Activated CD4-positive, alpha-beta memory T cell treated with anti-CD3 and anti-CD28 coated beads for 36 hours (primary cell): ENCODE measurements at regions of chr14 and their contacts with region 1.

Region 1: GRCh38 chr14:31194095-31194494 is 13.5 kb downstream of the HECTD1 start:
- DNase-seq: no peak
- H3K4me3 Mint-ChIP-seq: no peak overlapping the region
- H3K27ac Mint-ChIP-seq: no peak overlapping the region
- H3K4me1 Mint-ChIP-seq: peaks cover 37% of the 10 kb centered on the region
- H3K27me3 Mint-ChIP-seq: no peaks in the 10 kb centered on the region

Region 2: DNA sequence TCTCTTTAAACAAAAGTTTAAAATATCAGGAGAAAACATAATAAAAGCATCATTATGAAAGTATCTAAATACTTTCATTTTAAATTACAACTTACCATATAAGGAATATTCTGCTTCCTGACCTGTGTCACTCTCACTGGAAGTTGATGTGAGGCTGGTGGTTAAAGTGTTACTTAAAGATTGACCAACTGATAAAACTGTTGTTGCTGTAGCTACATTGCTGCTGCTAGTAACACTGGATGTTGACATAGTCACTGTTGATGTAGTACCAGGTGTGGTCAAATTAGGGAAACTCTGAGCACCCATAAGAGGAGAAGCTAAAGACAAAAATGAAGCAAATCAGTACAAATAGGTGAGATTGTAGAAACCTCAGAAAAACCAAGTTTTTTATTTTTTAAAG is 66.4 kb before region 1 on chr14:
- CTCF ChIA-PET with region 1: no interaction called
- POLR2A ChIA-PET with region 1: no interaction called
- intact Hi-C with region 1: loop called (anchors 5 kb)
- DNase-seq: peak; percentile 14
- H3K4me3 Mint-ChIP-seq: no peak overlapping the region
- H3K27ac Mint-ChIP-seq: peak overlapping the region; percentile 55
- H3K4me1 Mint-ChIP-seq: peaks cover 33% of the 10 kb centered on the region
- H3K27me3 Mint-ChIP-seq: no peaks in the 10 kb centered on the region

Region 3: GRCh38 chr14:31142455-31143087 is 51.5 kb before region 1 on chr14:
- CTCF ChIA-PET with region 1: no interaction called
- POLR2A ChIA-PET with region 1: no interaction called
- intact Hi-C with region 1: no loop called
- DNase-seq: no peak
- H3K4me3 Mint-ChIP-seq: no peak overlapping the region
- H3K27ac Mint-ChIP-seq: no peak overlapping the region
- H3K4me1 Mint-ChIP-seq: no peaks in the 10 kb centered on the region
- H3K27me3 Mint-ChIP-seq: no peaks in the 10 kb centered on the region

Region 4: GRCh38 chr14:31414190-31414833 is 220.2 kb after region 1 on chr14:
- CTCF ChIA-PET with region 1: no interaction called
- POLR2A ChIA-PET with region 1: no interaction called
- intact Hi-C with region 1: no loop called
- DNase-seq: no peak
- H3K4me3 Mint-ChIP-seq: no peak overlapping the region
- H3K27ac Mint-ChIP-seq: no peak overlapping the region
- H3K4me1 Mint-ChIP-seq: peaks cover 18% of the 10 kb centered on the region
- H3K27me3 Mint-ChIP-seq: no peaks in the 10 kb centered on the region